CD4-positive, alpha-beta memory T cell (primary cell): ENCODE measurements at regions of chr19 and their contacts with region 1.

Region 1: GRCh38 chr19:1905071-1905862 is at the starts of genes ADAT3 and SCAMP4:
- DNase-seq: peak; percentile 96 to 99 (median 98)
- H3K4me3 ChIP-seq: peak within 1 kb of the TSS; percentile 57 to 75
- H3K4me3 Mint-ChIP-seq: peak within 1 kb of the TSS; percentile 87 to 96 (median 93)
- H3K27ac ChIP-seq: peak within 1 kb of the TSS; percentile 62
- H3K27ac Mint-ChIP-seq: peak within 1 kb of the TSS; percentile 82 to 97 (median 96)
- H3K4me1 ChIP-seq: peaks cover 14% of the 10 kb centered on the region
- H3K4me1 Mint-ChIP-seq: peaks cover 9 to 46% (median 12%) of the 10 kb centered on the region in 4 donors
- H3K27me3 ChIP-seq: no peaks in the 10 kb centered on the region
- H3K27me3 Mint-ChIP-seq: no peaks in the 10 kb centered on the region
- total RNA-seq, gene ADAT3: 3.7 to 4.9 TPM
- total RNA-seq, gene SCAMP4: 23.4 to 29.1 TPM

Region 2: GRCh38 chr19:1848399-1849131 is 56.7 kb before region 1 on chr19 and contains the start of gene REXO1:
- CTCF ChIA-PET with region 1: no interaction called
- POLR2A ChIA-PET with region 1: no interaction called
- intact Hi-C with region 1: loop called (anchors 1 kb)
- DNase-seq: peak; percentile 97 to 100 (median 98)
- H3K4me3 ChIP-seq: peak within 1 kb of the TSS; percentile 73 to 92
- H3K4me3 Mint-ChIP-seq: peak within 1 kb of the TSS; percentile 87 to 93 (median 90)
- H3K27ac ChIP-seq: peak within 1 kb of the TSS; percentile 93
- H3K27ac Mint-ChIP-seq: peak within 1 kb of the TSS; percentile 91 to 94 (median 94)
- H3K4me1 ChIP-seq: peaks cover 75% of the 10 kb centered on the region
- H3K4me1 Mint-ChIP-seq: peaks cover 31 to 75% (median 50%) of the 10 kb centered on the region in 4 donors
- H3K27me3 ChIP-seq: no peaks in the 10 kb centered on the region
- H3K27me3 Mint-ChIP-seq: no peaks in the 10 kb centered on the region
- total RNA-seq, gene REXO1: 57.1 to 57.3 TPM

Region 3: DNA sequence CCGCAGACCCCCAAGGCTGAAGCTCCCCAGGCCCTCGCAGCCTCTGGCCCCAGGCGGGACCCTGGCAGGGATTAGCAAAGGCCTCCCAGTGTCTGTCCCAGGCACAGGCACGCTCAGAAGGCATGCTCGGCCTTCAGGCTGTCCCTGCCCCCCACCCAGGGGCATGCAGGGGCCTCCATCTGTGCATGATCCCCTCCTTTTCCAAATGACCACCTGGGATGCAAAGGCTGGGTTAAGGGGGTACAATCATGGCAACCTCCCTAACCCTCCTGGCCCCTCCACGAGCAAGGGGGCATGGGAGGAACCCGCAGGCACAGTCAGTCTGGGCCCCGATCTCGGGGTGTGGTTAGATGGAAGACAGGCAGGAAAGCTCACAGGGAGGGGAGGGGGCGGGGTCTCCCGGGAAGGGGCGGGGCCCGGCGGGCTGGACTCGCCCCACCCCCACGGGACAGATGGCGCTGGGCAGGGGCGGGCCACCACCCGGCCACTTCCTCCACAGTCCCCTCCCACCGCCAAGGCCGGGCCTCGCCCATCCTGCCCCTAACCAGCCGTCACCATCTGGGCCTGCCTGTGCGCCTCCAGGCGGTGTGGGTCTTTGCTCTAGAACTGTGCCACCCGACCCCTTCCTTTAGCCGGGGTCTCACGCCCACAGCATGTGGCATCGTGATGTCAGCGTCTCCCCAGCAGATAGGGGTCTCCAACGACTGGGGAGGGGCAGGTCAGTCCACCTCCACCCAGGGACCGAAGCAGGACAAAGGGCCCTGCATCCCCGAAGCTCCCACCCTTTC is 50.0 kb before region 1 on chr19:
- CTCF ChIA-PET with region 1: no interaction called
- POLR2A ChIA-PET with region 1: no interaction called
- intact Hi-C with region 1: loop called (anchors 1 kb)
- DNase-seq: peak; percentile 81 to 85 (median 84)
- H3K4me3 ChIP-seq: peak overlapping the region; percentile 67 to 77
- H3K4me3 Mint-ChIP-seq: peak overlapping the region; percentile 82 to 89 (median 86)
- H3K27ac ChIP-seq: peak overlapping the region; percentile 73
- H3K27ac Mint-ChIP-seq: peak overlapping the region; percentile 89 to 94 (median 93)
- H3K4me1 ChIP-seq: peaks cover 86% of the 10 kb centered on the region
- H3K4me1 Mint-ChIP-seq: peaks cover 25 to 72% (median 45%) of the 10 kb centered on the region in 4 donors
- H3K27me3 ChIP-seq: no peaks in the 10 kb centered on the region
- H3K27me3 Mint-ChIP-seq: no peaks in the 10 kb centered on the region

Region 4: DNA sequence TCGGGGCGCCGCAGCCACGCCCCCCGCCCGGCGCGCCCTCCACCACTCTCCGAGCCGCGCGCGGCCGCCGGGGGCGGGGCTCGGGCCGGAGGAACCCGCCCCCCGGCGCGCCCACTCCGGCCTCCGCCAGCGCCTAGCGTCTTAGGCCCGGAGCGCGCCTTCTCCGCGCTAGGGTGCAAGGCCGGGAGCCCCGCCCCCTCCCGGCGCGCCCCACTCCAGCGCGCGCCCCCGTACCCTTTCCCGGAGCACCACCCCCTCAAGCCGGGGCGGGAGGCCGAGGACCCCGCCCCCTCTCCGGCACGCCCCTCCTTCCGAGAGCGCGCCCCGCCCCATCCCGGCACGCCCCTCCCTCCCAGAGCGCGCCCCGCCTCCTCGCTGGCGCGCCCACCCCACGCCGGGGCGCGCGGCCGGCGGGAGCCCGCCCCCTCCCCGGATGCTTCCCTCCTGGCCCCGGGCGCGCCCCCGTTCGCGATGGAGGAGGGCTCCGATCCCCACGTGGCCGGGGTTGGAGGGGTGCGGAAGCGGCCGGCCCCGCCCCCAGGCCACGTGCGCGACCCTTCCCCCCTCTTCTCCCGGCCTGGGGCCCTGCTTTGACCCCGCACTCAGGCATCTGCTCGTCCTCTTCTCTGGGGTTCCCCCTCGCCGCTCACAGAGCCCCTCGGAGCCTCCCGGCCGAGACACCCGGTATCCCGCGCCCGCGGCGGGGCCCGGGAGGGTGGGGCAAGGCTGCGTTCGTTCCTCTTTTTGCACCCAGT is 41.4 kb before region 1 on chr19:
- CTCF ChIA-PET with region 1: interaction called, 4 read pairs
- POLR2A ChIA-PET with region 1: interaction called, 8 read pairs
- intact Hi-C with region 1: loop called (anchors 1 kb)
- DNase-seq: peak; percentile 92 to 94 (median 94)
- H3K4me3 ChIP-seq: peak overlapping the region; percentile 23 to 76
- H3K4me3 Mint-ChIP-seq: peak overlapping the region; percentile 58 to 83 (median 74)
- H3K27ac ChIP-seq: peak overlapping the region; percentile 74
- H3K27ac Mint-ChIP-seq: peak overlapping the region in 5 of 7 donors; percentile 52 to 91 (median 88)
- H3K4me1 ChIP-seq: peaks cover 38% of the 10 kb centered on the region
- H3K4me1 Mint-ChIP-seq: peaks cover 8 to 41% (median 25%) of the 10 kb centered on the region in 4 donors
- H3K27me3 ChIP-seq: no peaks in the 10 kb centered on the region
- H3K27me3 Mint-ChIP-seq: no peaks in the 10 kb centered on the region

Region 5: DNA sequence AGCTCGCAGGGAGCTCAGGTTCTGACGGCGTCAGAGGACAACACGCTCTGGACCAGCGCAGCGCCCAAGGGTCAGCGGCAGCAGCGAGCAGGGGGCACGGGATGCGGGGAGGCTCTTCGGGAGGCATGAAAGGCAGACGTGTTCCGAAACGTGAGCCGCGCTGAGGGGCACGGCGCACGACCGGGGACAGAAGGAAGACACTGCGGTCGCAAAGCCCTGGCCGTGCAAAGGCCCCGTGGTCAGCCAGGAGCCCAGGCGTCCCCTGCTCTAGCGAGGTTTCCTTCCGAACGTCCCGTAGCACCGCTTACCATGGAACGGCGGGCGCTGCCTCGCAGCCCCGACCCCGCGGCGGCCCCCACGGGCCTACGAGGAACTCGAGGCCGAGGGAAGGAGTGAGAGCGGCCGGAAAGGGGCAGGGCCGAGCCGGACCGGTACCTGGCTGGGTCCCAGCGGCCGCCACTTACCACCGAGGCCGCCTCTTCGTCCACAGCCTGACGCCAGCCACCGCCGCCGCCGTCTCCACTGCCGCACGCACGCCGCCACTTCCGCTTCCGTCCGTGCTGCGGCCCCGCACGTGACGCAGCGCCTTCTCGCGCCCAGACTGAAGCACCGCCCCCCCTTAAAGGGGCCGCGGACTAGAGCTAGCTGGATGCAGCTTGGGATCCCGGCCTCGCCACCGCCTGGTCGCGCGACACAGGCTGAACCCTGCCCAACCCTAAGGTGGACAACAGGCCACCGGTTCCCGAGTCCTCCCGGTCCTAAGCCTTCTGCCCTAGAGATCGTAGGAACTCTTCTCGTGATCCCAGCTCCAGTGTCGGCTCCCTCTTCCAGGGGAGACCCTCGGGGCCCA is 29.4 kb before region 1 on chr19:
- CTCF ChIA-PET with region 1: no interaction called
- POLR2A ChIA-PET with region 1: interaction called, 81 read pairs
- intact Hi-C with region 1: loop called (anchors 1 kb)
- DNase-seq: peak; percentile 80 to 87 (median 85)
- H3K4me3 ChIP-seq: peak overlapping the region; percentile 94 to 97
- H3K4me3 Mint-ChIP-seq: peak overlapping the region; percentile 93 to 99 (median 98)
- H3K27ac ChIP-seq: peak overlapping the region; percentile 92
- H3K27ac Mint-ChIP-seq: peak overlapping the region; percentile 89 to 99 (median 98)
- H3K4me1 ChIP-seq: peaks cover 46% of the 10 kb centered on the region
- H3K4me1 Mint-ChIP-seq: peaks cover 12 to 43% (median 20%) of the 10 kb centered on the region in 4 donors
- H3K27me3 ChIP-seq: no peaks in the 10 kb centered on the region
- H3K27me3 Mint-ChIP-seq: no peaks in the 10 kb centered on the region

Region 6: DNA sequence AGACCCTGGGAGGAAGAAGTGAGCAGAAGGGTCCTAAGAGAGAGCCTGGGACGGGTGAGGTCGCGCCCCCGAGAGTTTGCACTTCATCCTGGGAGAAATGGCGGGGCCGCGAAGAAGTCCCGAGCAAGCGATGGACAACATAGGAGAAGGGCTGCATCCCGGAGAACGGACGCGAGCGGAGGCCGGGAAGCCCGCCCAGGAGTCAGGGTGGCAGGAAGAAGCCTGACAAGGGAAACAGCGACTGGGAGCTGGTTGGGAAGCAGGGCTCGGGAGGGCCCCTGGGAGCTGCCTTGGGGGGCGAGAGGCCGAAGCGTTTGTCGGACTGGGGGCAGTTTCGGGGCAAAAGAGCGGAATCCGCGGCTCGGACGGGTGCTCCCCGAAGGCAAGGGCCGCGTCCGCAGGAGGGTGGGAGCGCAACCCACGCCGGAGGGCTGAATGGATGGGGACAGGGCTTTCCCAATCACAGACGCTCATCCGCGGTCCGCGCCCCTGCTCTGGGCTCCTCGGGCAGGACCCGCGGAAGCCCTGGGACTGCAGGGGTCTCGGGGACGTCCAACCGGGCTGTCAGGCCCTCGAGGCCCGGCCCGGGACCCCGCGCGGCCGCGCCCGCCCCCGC is 20.4 kb before region 1 on chr19:
- CTCF ChIA-PET with region 1: no interaction called
- POLR2A ChIA-PET with region 1: interaction called, 81 read pairs
- intact Hi-C with region 1: loop called (anchors 1 kb)
- DNase-seq: peak in 1 of 5 donors; percentile 40
- H3K4me3 ChIP-seq: peak overlapping the region; percentile 69 to 93
- H3K4me3 Mint-ChIP-seq: peak overlapping the region; percentile 98 to 100 (median 100)
- H3K27ac ChIP-seq: peak overlapping the region; percentile 95
- H3K27ac Mint-ChIP-seq: peak overlapping the region; percentile 98 to 100 (median 99)
- H3K4me1 ChIP-seq: peaks cover 42% of the 10 kb centered on the region
- H3K4me1 Mint-ChIP-seq: peaks cover 13 to 43% (median 28%) of the 10 kb centered on the region in 4 donors
- H3K27me3 ChIP-seq: no peaks in the 10 kb centered on the region
- H3K27me3 Mint-ChIP-seq: peaks cover 0 to 3% of the 10 kb centered on the region in 2 donors

Region 7: DNA sequence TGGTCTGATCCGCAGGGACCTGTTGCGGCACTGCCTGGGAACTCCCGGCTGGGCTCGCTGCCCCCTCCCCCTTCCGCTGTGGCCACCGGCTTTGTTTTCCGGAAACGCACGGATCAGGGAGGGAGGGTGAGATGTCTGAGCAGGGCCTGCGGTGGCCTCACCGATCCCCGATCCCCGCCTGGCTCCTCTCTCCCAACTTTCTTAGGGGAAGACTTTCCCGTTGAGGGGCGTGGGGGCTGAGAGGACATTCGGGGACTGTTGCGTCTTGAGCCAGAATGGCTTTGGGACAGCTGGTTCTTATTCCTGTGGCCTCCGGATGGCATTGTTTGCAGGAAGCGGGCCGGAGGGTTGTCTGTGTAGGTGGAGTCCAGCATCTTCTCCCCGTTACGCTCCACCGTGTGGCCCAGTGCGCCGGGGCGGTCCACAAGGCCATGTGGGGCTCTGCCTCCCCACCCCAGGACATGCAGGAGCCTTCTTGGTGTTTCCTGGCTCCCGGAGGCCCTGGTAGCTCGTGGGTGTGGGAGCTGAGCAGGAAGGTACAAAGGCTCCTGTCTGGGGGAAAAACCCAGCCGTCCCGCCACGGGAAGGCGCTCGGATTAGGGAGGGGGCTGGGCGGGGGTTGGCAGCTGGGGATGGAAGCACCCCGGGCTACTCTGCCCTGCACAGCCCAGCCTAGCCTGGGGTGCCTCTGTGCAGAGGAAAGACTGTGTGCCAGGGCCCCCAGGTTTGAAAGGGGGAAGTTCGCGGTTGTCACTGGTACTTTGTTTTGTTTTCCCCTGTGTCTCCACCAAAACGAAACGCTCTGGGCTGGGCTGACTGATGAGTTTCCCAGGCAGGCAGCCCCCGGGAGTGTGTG is 37.0 kb after region 1 on chr19:
- CTCF ChIA-PET with region 1: interaction called, 3 read pairs
- POLR2A ChIA-PET with region 1: no interaction called
- intact Hi-C with region 1: loop called (anchors 1 kb)
- DNase-seq: peak; percentile 78 to 89 (median 84)
- H3K4me3 ChIP-seq: peak overlapping the region; percentile 81 to 99
- H3K4me3 Mint-ChIP-seq: peak overlapping the region; percentile 90 to 99 (median 97)
- H3K27ac ChIP-seq: peak overlapping the region; percentile 91
- H3K27ac Mint-ChIP-seq: peak overlapping the region; percentile 97 to 100 (median 99)
- H3K4me1 ChIP-seq: peaks cover 45% of the 10 kb centered on the region
- H3K4me1 Mint-ChIP-seq: peaks cover 15 to 49% (median 33%) of the 10 kb centered on the region in 4 donors
- H3K27me3 ChIP-seq: no peaks in the 10 kb centered on the region
- H3K27me3 Mint-ChIP-seq: peaks cover 0 to 2% of the 10 kb centered on the region in 2 donors